Activated naive CD4-positive, alpha-beta T cell treated with anti-CD3 and anti-CD28 coated beads for 36 hours (primary cell): ENCODE measurements at regions of chr1 and their contacts with region 1.

Region 1: DNA sequence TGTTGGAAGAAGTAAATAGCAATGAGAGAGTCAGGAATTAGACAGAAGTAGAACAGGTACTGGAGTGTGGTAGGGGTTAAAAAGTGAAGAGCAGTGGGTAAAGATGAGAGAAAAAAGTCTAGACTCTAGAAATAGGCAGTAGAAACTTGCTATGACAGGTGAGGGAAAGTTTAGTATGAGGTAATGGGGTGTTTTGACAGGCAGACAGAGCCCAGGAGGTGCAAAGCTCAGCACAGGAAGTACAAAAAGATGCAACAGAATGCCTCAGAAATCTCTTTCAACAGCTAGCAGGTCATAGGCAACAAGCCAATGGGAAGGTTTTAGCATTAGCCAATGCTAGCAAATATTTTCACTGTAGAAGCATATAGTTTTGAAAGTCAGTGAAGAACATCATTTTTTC is 319.1 kb upstream of the SGIP1 start:
- DNase-seq: peak; percentile 57
- H3K4me3 Mint-ChIP-seq: no peak overlapping the region
- H3K27ac Mint-ChIP-seq: peak overlapping the region; percentile 1
- H3K4me1 Mint-ChIP-seq: peaks cover 17% of the 10 kb centered on the region
- H3K27me3 Mint-ChIP-seq: no peaks in the 10 kb centered on the region

Region 2: GRCh38 chr1:66231217-66231616 is 16.3 kb after region 1 on chr1:
- CTCF ChIA-PET with region 1: no interaction called
- intact Hi-C with region 1: loop called (anchors 1 kb)
- DNase-seq: no peak
- H3K4me3 Mint-ChIP-seq: no peak overlapping the region
- H3K27ac Mint-ChIP-seq: peak overlapping the region; percentile 5
- H3K4me1 Mint-ChIP-seq: peaks cover 11% of the 10 kb centered on the region
- H3K27me3 Mint-ChIP-seq: peaks cover 4% of the 10 kb centered on the region